ENCODE measurements at regions of chr18 and their contacts with region 1.

Region 1: GRCh38 chr18:48675352-48675761 is 136.5 kb downstream of the CTIF start:
- DNase-seq: peak; percentile 82
- H3K4me3 ChIP-seq: no peak overlapping the region
- H3K27ac ChIP-seq: no peak overlapping the region
- H3K27me3 ChIP-seq: no peaks in the 10 kb centered on the region
- CTCF ChIP-seq: peak; percentile 94

Region 2: DNA sequence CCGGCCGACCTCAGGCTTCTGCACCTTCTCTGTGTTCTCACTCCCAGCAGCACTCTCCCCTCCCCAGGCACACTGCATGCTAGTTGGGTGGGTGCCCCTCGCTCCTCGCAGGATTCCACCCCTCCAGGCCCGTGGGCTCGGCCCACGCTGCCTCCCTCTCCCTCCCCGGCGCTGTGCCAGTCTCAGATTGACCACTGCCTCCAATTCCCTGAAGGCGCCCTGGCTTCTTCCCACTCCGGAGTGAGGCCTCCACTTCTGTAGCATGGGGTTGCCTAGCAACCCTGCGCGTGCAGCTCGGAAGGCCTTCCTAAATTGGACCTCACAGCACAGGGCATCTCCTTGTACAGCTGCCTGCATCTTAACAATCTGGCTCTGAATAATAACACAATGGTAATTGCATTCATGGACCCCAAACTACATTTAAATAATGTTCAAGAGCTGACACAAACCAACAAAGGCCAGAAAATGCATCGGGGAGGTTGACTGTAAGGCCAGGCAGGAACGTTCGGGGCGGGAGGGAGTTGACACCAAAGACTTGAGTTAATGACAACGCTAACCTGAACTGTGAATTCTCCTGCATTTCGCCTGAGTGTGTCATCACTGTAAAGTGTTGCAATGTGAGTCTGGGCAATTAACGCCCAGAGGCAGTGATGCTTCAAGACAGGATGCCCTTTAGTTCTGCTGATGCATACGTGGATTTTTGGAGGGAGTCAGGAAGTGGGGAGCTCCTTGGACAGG is 489.1 kb before region 1 on chr18:
- in situ Hi-C with region 1: no loop called
- DNase-seq: no peak
- H3K4me3 ChIP-seq: no peak overlapping the region
- H3K27ac ChIP-seq: no peak overlapping the region
- H3K27me3 ChIP-seq: peaks cover 4% of the 10 kb centered on the region
- CTCF ChIP-seq: no peak

Region 3: GRCh38 chr18:49206717-49207116 is 531.4 kb after region 1 on chr18:
- in situ Hi-C with region 1: loop called (anchors 25 kb)
- DNase-seq: no peak
- H3K4me3 ChIP-seq: no peak overlapping the region
- H3K27ac ChIP-seq: no peak overlapping the region
- H3K27me3 ChIP-seq: no peaks in the 10 kb centered on the region
- CTCF ChIP-seq: peak; percentile 44